HepG2 (cell line): ENCODE measurements at regions of chr6 and their contacts with region 1.

Region 1: DNA sequence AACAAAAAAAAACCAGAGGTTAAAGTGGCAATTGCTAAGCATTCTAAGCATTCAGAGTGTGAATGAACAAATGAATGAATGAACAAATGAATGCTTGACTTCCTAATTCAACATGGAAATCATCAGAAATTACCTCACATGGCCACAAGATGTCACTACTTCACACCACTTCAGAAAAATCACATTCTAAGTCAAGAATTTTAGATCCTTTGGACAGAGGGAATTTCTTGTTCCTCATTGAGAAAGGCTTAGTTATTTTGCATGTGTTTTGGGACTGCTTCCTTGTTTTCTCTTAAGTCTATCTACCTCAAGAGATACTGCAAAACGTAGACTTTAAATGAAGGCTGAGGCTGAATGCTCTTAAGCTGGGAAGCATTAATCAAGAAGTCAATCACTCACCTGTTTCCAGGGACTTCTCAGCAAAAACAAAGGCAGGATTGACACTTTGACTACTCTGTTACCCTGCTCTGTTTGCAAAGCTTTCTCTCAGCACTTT is 120.2 kb downstream of the MBOAT1 start:
- DNase-seq: peak; percentile 57
- ATAC-seq: peak; percentile 43; the same call in 1 of the 3 replicates
- H3K4me3 ChIP-seq: no peak overlapping the region
- H3K27ac ChIP-seq: no peak overlapping the region
- H3K4me1 ChIP-seq: no peaks in the 10 kb centered on the region
- H3K27me3 ChIP-seq: no peaks in the 10 kb centered on the region; a peak in 2 of 5 replicates
- CTCF ChIP-seq: peak; percentile 83
- EP300 ChIP-seq: no peak
- POLR2A ChIP-seq: no peak
- RAD21 ChIP-seq: no peak

Region 2: DNA sequence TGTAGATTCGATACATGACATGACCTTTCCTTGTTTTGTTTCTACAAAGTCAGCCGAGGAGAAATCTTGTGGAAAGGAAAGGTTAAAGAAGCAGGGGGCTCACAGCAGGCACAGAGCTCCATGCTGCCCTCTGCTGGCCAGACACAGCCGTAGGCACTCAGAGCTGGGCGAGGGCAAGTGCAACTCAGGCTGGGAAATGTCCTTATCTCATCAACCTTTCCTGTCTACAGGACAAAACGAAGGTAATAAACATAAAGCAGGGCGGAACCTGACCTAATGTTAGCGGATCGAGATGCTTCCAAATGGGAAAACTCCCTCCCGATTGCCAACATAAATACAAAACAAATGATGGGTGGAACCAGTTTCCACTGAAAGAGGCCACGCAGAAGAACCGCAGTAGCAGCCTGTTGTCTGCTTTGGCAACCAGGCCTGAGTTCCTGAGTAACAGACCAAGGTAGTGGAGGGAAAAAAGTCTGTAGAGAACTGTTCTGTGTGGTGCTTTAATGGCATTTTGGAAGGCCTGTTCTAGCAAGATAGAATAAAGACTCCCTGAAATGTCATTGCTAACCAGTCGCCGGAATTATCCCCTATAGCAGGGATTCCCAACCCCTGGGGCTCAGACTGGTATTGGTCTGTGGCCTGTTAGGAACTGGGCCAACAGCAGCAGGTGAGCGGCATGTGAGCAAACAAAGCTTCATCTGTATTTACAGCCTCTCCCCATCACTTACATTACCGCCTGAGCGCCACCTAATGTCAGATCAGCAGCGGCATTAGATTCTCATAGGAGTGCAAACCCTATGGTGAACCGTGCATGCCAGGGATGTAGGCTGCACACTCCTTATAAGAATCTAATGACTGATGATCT is 34.9 kb after region 1 on chr6:
- CTCF ChIA-PET with region 1: interaction called, 10 read pairs
- POLR2A ChIA-PET with region 1: no interaction called
- in situ Hi-C with region 1: loop called (anchors 5 kb)
- intact Hi-C with region 1: loop called (anchors 1 kb)
- DNase-seq: peak; percentile 66
- ATAC-seq: peak; percentile 97
- H3K4me3 ChIP-seq: no peak overlapping the region
- H3K27ac ChIP-seq: no peak overlapping the region
- H3K4me1 ChIP-seq: peaks cover 15% of the 10 kb centered on the region
- H3K27me3 ChIP-seq: peaks cover 0 to 12% of the 10 kb centered on the region in 2 experiments; a peak in 1 of 5 replicates
- CTCF ChIP-seq: peak; percentile 87
- EP300 ChIP-seq: no peak
- POLR2A ChIP-seq: no peak
- RAD21 ChIP-seq: peak; percentile 42

Region 3: GRCh38 chr6:20148433-20148832 is 56.3 kb after region 1 on chr6:
- CTCF ChIA-PET with region 1: no interaction called
- POLR2A ChIA-PET with region 1: no interaction called
- in situ Hi-C with region 1: no loop called
- intact Hi-C with region 1: no loop called
- DNase-seq: no peak
- ATAC-seq: no peak
- H3K4me3 ChIP-seq: no peak overlapping the region
- H3K27ac ChIP-seq: no peak overlapping the region
- H3K4me1 ChIP-seq: peaks cover 8% of the 10 kb centered on the region
- H3K27me3 ChIP-seq: no peaks in the 10 kb centered on the region
- CTCF ChIP-seq: no peak
- EP300 ChIP-seq: no peak
- POLR2A ChIP-seq: no peak
- RAD21 ChIP-seq: no peak

Region 4: GRCh38 chr6:20291764-20292580 is 199.9 kb after region 1 on chr6:
- CTCF ChIA-PET with region 1: interaction called, 5 read pairs
- POLR2A ChIA-PET with region 1: no interaction called
- in situ Hi-C with region 1: no loop called
- intact Hi-C with region 1: loop called (anchors 2 kb)
- DNase-seq: peak; percentile 75
- ATAC-seq: peak; percentile 96
- H3K4me3 ChIP-seq: no peak overlapping the region
- H3K27ac ChIP-seq: no peak overlapping the region
- H3K4me1 ChIP-seq: no peaks in the 10 kb centered on the region
- H3K27me3 ChIP-seq: no peaks in the 10 kb centered on the region
- CTCF ChIP-seq: peak; percentile 95
- EP300 ChIP-seq: no peak
- POLR2A ChIP-seq: no peak
- RAD21 ChIP-seq: peak; percentile 82

Region 5: DNA sequence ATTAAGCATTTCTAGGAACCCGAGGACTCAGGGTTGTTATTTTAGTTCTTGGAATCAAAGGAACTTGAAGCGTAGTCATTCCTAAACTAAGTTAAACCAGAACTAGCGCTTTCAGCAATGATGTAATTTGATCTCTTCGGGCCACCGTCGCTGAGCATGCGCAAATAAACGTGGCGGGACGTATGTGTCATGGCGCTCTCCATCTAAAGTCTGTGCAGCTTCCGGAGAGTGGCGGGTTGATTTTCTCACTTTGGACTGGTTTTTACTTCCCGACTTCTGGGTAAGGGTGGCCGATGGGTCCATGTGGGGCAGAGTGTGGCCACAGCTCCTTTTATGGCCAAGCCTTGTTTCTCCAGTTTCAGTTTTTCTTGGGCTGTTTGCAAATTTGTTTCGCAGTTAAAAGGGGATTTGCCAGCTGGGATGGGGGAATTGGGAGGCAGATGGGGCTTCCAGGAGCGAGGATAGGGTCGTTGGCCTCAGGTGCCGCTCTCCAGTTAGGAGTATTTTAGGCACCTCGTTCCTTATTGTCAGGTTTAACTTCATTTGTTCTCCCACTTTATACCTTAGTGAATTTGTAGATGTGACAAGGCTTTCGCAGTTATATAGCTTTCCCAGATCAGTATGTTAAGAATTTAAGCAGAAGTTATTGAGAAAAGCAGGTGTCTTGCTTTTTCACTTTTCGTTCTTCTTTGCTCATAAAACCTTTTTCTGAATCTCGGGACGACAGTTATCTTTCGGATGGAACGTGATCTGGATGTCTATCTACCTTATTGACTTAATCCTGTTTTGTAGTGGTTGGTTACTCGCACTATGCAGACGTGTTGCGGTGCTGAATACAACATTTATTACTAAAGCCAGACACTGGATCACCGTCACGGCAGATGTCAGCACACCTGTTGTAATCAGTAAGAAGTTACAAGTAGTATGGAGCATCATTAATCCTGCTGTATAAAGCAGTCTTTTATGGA is 442.5 kb after region 1 on chr6 and contains the start of gene CDKAL1:
- CTCF ChIA-PET with region 1: interaction called, 5 read pairs
- POLR2A ChIA-PET with region 1: no interaction called
- in situ Hi-C with region 1: loop called (anchors 10 kb)
- intact Hi-C with region 1: loop called (anchors 1 kb)
- DNase-seq: peak; percentile 91
- ATAC-seq: peak; percentile 97
- H3K4me3 ChIP-seq: peak within 1 kb of the TSS; percentile 84 to 91 (median 86)
- H3K27ac ChIP-seq: peak within 1 kb of the TSS; percentile 84
- H3K4me1 ChIP-seq: peaks cover 29% of the 10 kb centered on the region
- H3K27me3 ChIP-seq: peaks cover 0 to 5% of the 10 kb centered on the region in 2 experiments; a peak in 1 of 5 replicates
- CTCF ChIP-seq: no peak
- EP300 ChIP-seq: 0 out of 4 replicates have a peak, but pooled peaks of 1 of the 2 experiments have one; percentile 38
- POLR2A ChIP-seq: peak; percentile 84 to 95
- RAD21 ChIP-seq: no peak
- total RNA-seq, gene CDKAL1: 27.7 and 33.6 TPM in 2 replicates